Activated CD8-positive, alpha-beta T cell treated with anti-CD3 and anti-CD28 coated beads, Interleukin-2, amount 10 ng/mL, durations not matched to agents 7 days and 5 days (primary cell): ENCODE measurements at regions of chr12 and their contacts with region 1.

Region 1: GRCh38 chr12:108838194-108839017 is 19.0 kb downstream of the SSH1 start:
- DNase-seq: peak; percentile 88
- ATAC-seq: peak; percentile 93
- H3K4me3 Mint-ChIP-seq: peak overlapping the region; percentile 42
- H3K27ac Mint-ChIP-seq: peak overlapping the region; percentile 86
- H3K4me1 Mint-ChIP-seq: peaks cover 68% of the 10 kb centered on the region
- H3K27me3 Mint-ChIP-seq: no peaks in the 10 kb centered on the region

Region 2: GRCh38 chr12:108826101-108826806 is 12.2 kb before region 1 on chr12:
- CTCF ChIA-PET with region 1: interaction called, 4 read pairs
- POLR2A ChIA-PET with region 1: interaction called, 11 read pairs
- DNase-seq: no peak
- ATAC-seq: no peak
- H3K4me3 Mint-ChIP-seq: no peak overlapping the region
- H3K27ac Mint-ChIP-seq: peak overlapping the region; percentile 51
- H3K4me1 Mint-ChIP-seq: peaks cover 74% of the 10 kb centered on the region
- H3K27me3 Mint-ChIP-seq: no peaks in the 10 kb centered on the region

Region 3: DNA sequence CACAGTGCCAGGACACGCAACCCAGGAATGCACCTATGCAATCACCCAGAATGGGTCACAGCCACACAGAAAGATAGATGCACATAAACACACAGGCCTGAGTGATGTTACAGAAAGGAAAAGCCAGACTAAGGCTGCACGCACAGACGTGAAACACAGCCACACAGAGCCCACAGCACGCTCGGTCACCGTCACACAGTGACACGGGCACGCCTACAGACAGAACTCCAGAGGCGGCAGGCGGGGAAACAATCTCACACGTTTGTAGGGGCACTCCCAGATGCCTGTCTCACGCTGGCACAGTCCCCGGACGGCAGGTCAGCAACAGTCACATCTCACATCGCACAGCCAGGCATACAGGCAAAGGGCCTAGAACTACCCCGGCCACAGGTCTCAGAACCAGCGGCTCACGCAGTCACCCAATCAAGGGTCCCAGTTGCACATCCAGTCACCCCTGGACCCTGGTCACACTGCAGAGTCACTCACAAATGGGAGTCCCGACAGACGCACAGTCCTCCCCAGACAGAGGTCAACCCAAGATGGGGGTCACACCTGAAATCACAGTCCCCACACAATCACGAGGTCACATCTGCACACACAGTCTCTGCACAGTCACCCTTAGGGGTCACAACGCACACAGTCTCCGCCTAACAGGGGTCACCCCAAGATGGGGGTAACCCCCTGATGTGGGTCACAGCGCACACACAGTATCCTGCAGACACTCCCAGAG is 18.2 kb after region 1 on chr12:
- CTCF ChIA-PET with region 1: interaction called, 4 read pairs
- POLR2A ChIA-PET with region 1: interaction called, 27 read pairs
- DNase-seq: peak; percentile 61
- ATAC-seq: peak; percentile 38
- H3K4me3 Mint-ChIP-seq: peak overlapping the region; percentile 93
- H3K27ac Mint-ChIP-seq: peak overlapping the region; percentile 92
- H3K4me1 Mint-ChIP-seq: peaks cover 56% of the 10 kb centered on the region
- H3K27me3 Mint-ChIP-seq: peaks cover 8% of the 10 kb centered on the region